PC-9 (cell line): ENCODE measurements at regions of chr6 and their contacts with region 1.

Region 1: GRCh38 chr6:73653571-73654424 is at the start of gene SLC17A5:
- DNase-seq: peak; percentile 82 to 92
- H3K4me3 ChIP-seq: peak within 1 kb of the TSS; percentile 77
- H3K27ac ChIP-seq: peak within 1 kb of the TSS; percentile 74
- H3K4me1 ChIP-seq: peaks cover 48% of the 10 kb centered on the region
- H3K27me3 ChIP-seq: no peaks in the 10 kb centered on the region
- CTCF ChIP-seq: no peak
- total RNA-seq, gene SLC17A5: 15.8 and 16.9 TPM in 2 replicates

Region 2: GRCh38 chr6:73121421-73121993 is 532.3 kb before region 1 on chr6:
- CTCF ChIA-PET with region 1: no interaction called
- POLR2A ChIA-PET with region 1: no interaction called
- intact Hi-C with region 1: no loop called
- DNase-seq: peak in 1 of 2 experiments; percentile 40
- H3K4me3 ChIP-seq: no peak overlapping the region
- H3K27ac ChIP-seq: no peak overlapping the region
- H3K4me1 ChIP-seq: no peaks in the 10 kb centered on the region
- H3K27me3 ChIP-seq: no peaks in the 10 kb centered on the region
- CTCF ChIP-seq: no peak

Region 3: DNA sequence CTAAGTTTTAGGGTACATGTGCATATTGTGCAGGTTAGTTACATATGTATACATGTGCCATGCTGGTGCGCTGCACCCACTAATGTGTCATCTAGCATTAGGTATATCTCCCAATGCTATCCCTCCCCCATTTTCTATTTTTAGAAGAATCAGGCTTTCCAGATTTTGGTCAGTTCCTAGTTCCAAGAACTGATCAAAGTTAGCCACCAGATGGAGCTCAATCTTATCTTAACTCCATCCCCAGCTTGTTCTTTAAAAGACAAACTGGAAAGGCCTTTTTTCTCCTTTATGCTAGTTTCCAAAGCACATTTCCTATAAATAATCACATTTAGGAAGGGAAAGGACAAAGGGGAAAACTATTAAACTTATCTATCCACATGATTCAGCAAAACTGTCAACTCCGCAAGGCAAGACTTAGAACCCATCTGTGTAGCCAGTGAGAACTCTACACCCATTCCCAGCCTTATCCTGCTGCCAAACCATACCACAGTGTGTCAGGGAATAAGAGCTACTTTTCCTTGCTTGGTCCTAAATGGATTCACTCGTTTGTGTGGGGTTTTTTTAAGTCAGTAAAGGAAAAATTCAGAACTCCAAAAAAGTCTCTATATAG is 368.0 kb before region 1 on chr6:
- CTCF ChIA-PET with region 1: interaction called, 5 read pairs
- POLR2A ChIA-PET with region 1: no interaction called
- intact Hi-C with region 1: loop called (anchors 10 kb)
- DNase-seq: peak in 1 of 2 experiments; percentile 43
- H3K4me3 ChIP-seq: no peak overlapping the region
- H3K27ac ChIP-seq: no peak overlapping the region
- H3K4me1 ChIP-seq: no peaks in the 10 kb centered on the region
- H3K27me3 ChIP-seq: no peaks in the 10 kb centered on the region
- CTCF ChIP-seq: peak; percentile 66

Region 4: DNA sequence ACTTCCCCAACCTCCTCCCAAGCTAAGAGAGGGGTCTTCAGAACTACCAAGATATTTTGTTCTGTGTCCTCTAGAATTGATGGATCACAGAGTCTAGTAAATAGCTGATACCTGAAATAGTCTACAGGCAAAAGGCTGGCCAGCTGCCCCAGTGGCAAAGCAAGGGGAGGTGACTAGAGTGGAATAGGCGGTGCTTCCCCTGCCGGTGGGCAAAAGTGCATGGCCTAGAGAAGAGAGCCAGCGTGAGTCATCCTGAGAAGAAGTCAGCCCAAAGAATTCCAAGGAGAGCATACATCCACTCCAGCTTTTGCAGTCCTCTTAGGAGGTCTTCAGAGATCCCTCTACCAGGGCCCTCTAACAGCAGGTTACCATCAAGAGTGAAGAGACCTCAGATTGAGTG is 314.5 kb before region 1 on chr6:
- CTCF ChIA-PET with region 1: no interaction called
- POLR2A ChIA-PET with region 1: no interaction called
- intact Hi-C with region 1: no loop called
- DNase-seq: peak in 1 of 2 experiments; percentile 8
- H3K4me3 ChIP-seq: no peak overlapping the region
- H3K27ac ChIP-seq: no peak overlapping the region
- H3K4me1 ChIP-seq: 0 out of 2 replicates have a peak, but pooled peaks cover 8% of the 10 kb centered on the region
- H3K27me3 ChIP-seq: no peaks in the 10 kb centered on the region
- CTCF ChIP-seq: no peak

Region 5: GRCh38 chr6:73451223-73452107 is 202.3 kb before region 1 on chr6:
- CTCF ChIA-PET with region 1: no interaction called
- POLR2A ChIA-PET with region 1: no interaction called
- intact Hi-C with region 1: loop called (anchors 2 kb)
- DNase-seq: peak; percentile 38 to 43
- H3K4me3 ChIP-seq: peak overlapping the region; percentile 92
- H3K27ac ChIP-seq: peak overlapping the region; percentile 74
- H3K4me1 ChIP-seq: peaks cover 27% of the 10 kb centered on the region
- H3K27me3 ChIP-seq: no peaks in the 10 kb centered on the region
- CTCF ChIP-seq: no peak

Region 6: GRCh38 chr6:73520688-73521350 is 133.0 kb before region 1 on chr6 and contains the start of gene EEF1A1:
- CTCF ChIA-PET with region 1: no interaction called
- POLR2A ChIA-PET with region 1: interaction called, 13 read pairs
- intact Hi-C with region 1: loop called (anchors 1 kb)
- DNase-seq: peak; percentile 98 to 99
- H3K4me3 ChIP-seq: peak within 1 kb of the TSS; percentile 89
- H3K27ac ChIP-seq: peak within 1 kb of the TSS; percentile 100
- H3K4me1 ChIP-seq: peaks cover 26% of the 10 kb centered on the region
- H3K27me3 ChIP-seq: no peaks in the 10 kb centered on the region
- CTCF ChIP-seq: no peak
- total RNA-seq, gene EEF1A1: 10,581 and 12,059 TPM in 2 replicates

Region 7: GRCh38 chr6:73610444-73611275 is 43.1 kb before region 1 on chr6:
- CTCF ChIA-PET with region 1: no interaction called
- POLR2A ChIA-PET with region 1: interaction called, 7 read pairs
- intact Hi-C with region 1: loop called (anchors 2 kb)
- DNase-seq: peak in 1 of 2 experiments; percentile 56
- H3K4me3 ChIP-seq: no peak overlapping the region
- H3K27ac ChIP-seq: peak overlapping the region; percentile 42
- H3K4me1 ChIP-seq: peaks cover 10% of the 10 kb centered on the region; the same call in 1 of the 2 replicates
- H3K27me3 ChIP-seq: no peaks in the 10 kb centered on the region
- CTCF ChIP-seq: peak; percentile 77

Region 8: DNA sequence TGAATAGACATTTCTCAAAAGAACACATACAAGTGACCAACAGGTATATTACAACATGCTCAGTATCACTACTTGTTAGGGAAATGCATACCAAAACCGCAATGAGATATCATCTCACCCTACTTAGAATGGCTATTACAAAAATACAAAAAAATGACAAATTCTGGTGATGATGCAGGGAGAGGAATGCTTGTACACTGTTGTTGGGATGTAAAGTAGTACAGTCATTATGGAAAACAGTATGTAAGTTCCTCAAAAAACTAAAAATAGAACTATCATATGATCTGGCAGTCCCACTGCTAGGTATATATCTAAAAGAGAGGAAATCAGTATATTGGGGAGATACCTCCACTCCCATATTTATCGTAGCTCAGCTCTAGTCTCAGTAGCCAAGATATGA is 10.9 kb after region 1 on chr6:
- CTCF ChIA-PET with region 1: no interaction called
- POLR2A ChIA-PET with region 1: interaction called, 13 read pairs
- intact Hi-C with region 1: no loop called
- DNase-seq: no peak
- H3K4me3 ChIP-seq: no peak overlapping the region
- H3K27ac ChIP-seq: no peak overlapping the region
- H3K4me1 ChIP-seq: peaks cover 21% of the 10 kb centered on the region
- H3K27me3 ChIP-seq: no peaks in the 10 kb centered on the region
- CTCF ChIP-seq: no peak